ENCODE measurements at regions of chr1 and their contacts with region 1.

Region 1: GRCh38 chr1:182391362-182392044 is at the start of gene GLUL:
- DNase-seq: peak; percentile 99
- H3K4me3 ChIP-seq: peak within 1 kb of the TSS; percentile 83 to 96 (median 96)
- H3K27ac ChIP-seq: peak within 1 kb of the TSS; percentile 97 to 99 (median 98)
- H3K4me1 ChIP-seq: peaks cover 42 to 56% (median 49%) of the 10 kb centered on the region in 4 donors
- H3K27me3 ChIP-seq: peaks cover 0 to 4% (median 0%) of the 10 kb centered on the region in 4 donors
- CTCF ChIP-seq: no peak
- EP300 ChIP-seq: no peak
- POLR2A ChIP-seq: peak; percentile 99
- total RNA-seq, gene GLUL: 2,071 to 4,011 (median 3,051) TPM

Region 2: DNA sequence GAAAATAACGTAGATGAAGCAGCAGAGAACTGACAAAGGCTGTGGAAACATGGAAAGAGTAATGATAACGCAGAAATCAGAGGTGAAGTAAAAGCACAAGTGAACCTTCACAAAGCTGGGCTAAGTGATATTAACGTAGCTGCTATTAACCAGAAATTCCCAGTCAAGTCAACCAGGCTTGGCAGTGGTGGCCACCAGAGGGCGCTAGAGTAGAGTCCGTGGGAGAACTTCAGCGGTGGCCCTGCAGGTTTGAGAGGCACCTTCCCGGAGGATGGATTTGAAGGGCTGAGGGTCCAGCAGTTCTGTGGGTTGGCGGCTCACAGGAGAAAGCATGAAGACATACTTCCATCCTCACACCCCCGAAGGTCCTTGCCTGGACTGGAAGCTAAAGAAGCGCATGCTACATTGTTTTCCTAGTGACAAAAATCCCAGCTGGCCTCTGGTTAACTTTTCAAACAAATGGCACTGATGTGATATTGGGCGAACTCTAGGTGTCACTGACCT is 248.3 kb before region 1 on chr1:
- intact Hi-C with region 1: loop called (anchors 1 kb)
- DNase-seq: peak; percentile 99
- H3K4me3 ChIP-seq: peak overlapping the region in 1 of 4 donors; percentile 21
- H3K27ac ChIP-seq: peak overlapping the region; percentile 90 to 97 (median 95)
- H3K4me1 ChIP-seq: peaks cover 26 to 50% (median 41%) of the 10 kb centered on the region in 4 donors
- H3K27me3 ChIP-seq: no peaks in the 10 kb centered on the region
- CTCF ChIP-seq: peak; percentile 95 to 98 (median 97)
- EP300 ChIP-seq: no peak
- POLR2A ChIP-seq: no peak

Region 3: DNA sequence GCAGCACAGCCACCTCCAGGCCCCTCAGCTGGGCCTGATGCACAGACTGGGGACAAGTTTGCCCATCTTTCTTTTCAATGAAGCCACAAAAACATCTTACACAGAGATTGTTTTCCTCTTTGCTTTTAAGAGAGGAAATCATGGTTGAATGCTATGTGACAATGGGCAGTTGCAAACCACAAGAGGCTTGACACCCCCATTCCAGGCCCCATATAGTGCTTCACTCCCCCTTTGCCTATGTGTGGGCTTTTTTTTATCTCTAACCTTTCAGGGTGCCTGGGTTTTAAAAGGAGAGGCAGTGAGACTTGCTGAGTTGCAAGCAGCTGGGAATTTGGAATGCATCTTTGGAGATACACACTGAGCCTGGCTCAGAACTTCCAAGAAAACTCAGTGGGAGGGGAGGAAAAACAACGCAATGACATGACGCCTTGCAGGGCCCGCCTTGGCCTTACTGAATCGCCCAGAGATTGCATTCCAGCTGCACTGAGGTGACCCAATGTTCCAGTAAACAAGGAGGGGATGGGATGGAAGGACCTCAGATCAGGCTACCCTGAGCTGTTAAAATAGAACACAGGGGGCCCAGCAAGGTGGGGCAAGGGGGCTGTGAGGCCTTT is 184.8 kb before region 1 on chr1:
- intact Hi-C with region 1: loop called (anchors 5 kb)
- DNase-seq: peak; percentile 92
- H3K4me3 ChIP-seq: no peak overlapping the region
- H3K27ac ChIP-seq: peak overlapping the region; percentile 66 to 75 (median 72)
- H3K4me1 ChIP-seq: peaks cover 11 to 66% (median 47%) of the 10 kb centered on the region in 4 donors
- H3K27me3 ChIP-seq: no peaks in the 10 kb centered on the region
- CTCF ChIP-seq: no peak
- EP300 ChIP-seq: peak; percentile 33
- POLR2A ChIP-seq: no peak

Region 4: DNA sequence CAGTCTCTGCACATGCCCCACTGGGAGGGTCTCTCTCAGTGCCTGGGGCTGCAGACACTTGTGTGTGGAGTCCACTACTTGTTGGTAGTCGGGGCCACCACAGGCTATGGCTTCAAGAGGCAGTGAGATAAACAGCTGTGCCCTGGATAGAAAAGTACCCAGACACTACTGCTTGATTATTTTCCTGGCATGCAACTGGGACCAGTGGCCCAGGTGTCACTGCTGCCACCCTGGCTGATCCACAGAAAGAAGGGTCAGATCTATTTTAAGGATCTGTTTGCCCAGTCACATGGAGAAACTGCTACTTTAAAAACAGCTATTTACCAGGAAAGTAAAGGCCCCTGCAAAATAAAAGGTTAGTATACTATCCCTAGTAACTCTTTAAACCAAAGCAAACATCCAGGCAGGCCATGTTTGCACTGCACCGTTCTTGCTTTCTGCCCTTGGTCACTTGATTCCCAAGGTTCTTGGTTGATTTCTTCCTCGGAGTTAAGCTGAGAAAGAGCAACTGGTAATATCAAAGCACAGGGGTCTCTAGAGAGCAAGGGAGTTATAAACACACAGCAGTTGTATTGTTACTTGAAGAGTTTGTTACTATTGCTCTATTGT is 99.8 kb before region 1 on chr1:
- intact Hi-C with region 1: loop called (anchors 2 kb)
- DNase-seq: no peak
- H3K4me3 ChIP-seq: no peak overlapping the region
- H3K27ac ChIP-seq: peak overlapping the region; percentile 71 to 86 (median 82)
- H3K4me1 ChIP-seq: peaks cover 15 to 49% (median 35%) of the 10 kb centered on the region in 4 donors
- H3K27me3 ChIP-seq: no peaks in the 10 kb centered on the region
- CTCF ChIP-seq: no peak
- EP300 ChIP-seq: no peak
- POLR2A ChIP-seq: no peak

Region 5: DNA sequence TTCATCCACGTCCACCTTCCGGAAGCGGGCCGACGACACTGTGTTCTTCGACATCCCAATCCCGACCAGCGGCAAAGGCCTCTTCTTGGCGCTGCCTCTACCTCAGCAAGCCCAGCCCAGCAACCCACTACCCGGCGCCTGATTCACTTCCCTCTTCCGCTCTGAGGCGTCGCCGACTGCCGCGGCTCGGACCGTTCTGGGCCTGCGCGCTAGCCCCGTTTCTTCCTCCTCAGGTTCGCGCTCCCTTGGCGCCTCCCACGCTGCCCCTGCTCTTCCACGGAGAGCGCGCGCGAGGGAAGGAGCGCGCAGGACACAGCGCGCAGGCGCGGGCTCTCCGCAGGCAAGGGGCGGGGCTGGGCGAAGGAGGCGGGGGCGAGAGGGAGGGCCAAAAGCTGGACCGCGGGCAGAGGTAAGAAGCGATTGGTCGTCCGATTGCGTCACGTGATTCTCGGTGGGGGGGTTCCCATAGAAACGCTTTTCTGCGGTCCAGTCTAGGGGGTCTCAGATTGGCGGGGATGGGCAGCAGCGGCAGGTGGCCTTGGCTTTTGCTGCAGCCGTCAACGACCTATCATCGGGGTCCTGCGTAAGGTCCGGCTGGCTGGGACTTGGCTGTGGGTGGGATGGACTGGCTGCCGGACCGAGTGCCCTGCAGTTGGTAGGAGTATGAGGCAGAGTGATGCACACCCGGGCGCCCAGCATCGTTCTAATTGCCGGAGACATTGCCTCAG is 1244.3 kb after region 1 on chr1 and contains the start of gene ARPC5:
- intact Hi-C with region 1: loop called (anchors 10 kb)
- DNase-seq: peak; percentile 99
- H3K4me3 ChIP-seq: peak within 1 kb of the TSS; percentile 90 to 95 (median 94)
- H3K27ac ChIP-seq: peak within 1 kb of the TSS; percentile 97 to 99 (median 98)
- H3K4me1 ChIP-seq: peaks cover 25 to 34% (median 33%) of the 10 kb centered on the region in 4 donors
- H3K27me3 ChIP-seq: no peaks in the 10 kb centered on the region
- CTCF ChIP-seq: peak in 1 of 3 experiments; percentile 31
- EP300 ChIP-seq: no peak
- POLR2A ChIP-seq: peak; percentile 90
- total RNA-seq, gene ARPC5: 80.6 to 111 (median 91.1) TPM